ENCODE measurements at regions of chr19 and their contacts with region 1.

Region 1: GRCh38 chr19:3434712-3435553 is 45.4 kb downstream of the SMIM24 start:
- DNase-seq: peak; percentile 92 to 96 (median 95)
- H3K4me3 ChIP-seq: peak overlapping the region; percentile 38
- H3K27ac ChIP-seq: peak overlapping the region; percentile 69 to 81
- H3K4me1 ChIP-seq: peaks cover 10% of the 10 kb centered on the region
- H3K27me3 ChIP-seq: no peaks in the 10 kb centered on the region
- CTCF ChIP-seq: peak in 1 of 3 donors; percentile 11
- EP300 ChIP-seq: peak; percentile 10
- POLR2A ChIP-seq: no peak

Region 2: DNA sequence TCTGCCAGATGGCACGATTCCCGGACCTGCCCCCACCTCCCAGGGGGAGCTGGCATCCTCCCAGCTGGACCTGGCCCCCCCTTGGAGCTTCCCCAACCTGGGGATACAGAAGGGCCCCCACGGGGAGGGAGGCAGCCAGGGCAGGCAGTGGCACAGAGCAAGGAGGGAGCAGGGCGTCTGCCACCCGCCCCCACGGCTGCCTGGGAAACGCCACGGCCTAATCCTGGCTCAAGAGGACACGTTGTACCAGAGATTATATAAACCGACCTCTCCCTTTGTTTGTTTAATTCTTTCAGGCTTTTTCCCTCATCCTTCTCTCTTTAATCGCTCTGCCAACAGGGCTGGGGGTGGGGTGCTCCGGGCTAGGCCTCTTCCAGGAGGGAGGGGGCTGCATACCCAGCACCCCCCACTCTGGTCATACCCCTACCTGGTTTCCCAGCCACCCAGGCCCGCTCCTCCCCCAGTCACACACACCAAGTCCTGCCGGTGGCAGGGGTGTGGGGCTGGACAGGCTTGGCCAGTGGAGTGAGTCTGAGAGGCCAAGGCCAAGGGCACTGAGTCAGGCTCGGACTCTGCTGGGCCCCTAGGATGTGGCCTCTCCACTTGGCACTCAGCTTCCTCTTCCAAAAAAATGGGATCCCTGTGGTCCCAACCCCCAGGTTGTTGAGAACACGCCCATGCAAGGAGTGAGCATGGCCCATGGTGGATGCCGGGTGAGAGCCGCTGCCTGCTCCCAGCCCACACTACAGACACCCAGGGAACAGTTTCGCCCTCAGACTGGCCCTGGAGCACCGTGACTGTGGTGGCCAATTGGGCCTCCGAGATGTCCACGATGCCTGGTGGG is 98.0 kb before region 1 on chr19:
- intact Hi-C with region 1: loop called in 2 of 4 experiments (anchors 5 to 10 kb)
- DNase-seq: peak; percentile 93 to 97 (median 95)
- H3K4me3 ChIP-seq: no peak overlapping the region
- H3K27ac ChIP-seq: peak overlapping the region; percentile 18 to 90
- H3K4me1 ChIP-seq: peaks cover 18% of the 10 kb centered on the region
- H3K27me3 ChIP-seq: no peaks in the 10 kb centered on the region
- CTCF ChIP-seq: peak in 1 of 3 donors; percentile 32
- EP300 ChIP-seq: peak; percentile 76
- POLR2A ChIP-seq: peak; percentile 41

Region 3: GRCh38 chr19:3471954-3472655 is 37.2 kb after region 1 on chr19:
- intact Hi-C with region 1: loop called in 1 of 4 experiments (anchors 5 kb)
- DNase-seq: peak in 4 of 5 donors; percentile 62 to 76 (median 70)
- H3K4me3 ChIP-seq: no peak overlapping the region
- H3K27ac ChIP-seq: no peak overlapping the region
- H3K4me1 ChIP-seq: peaks cover 5% of the 10 kb centered on the region
- H3K27me3 ChIP-seq: no peaks in the 10 kb centered on the region
- CTCF ChIP-seq: peak; percentile 65 to 88 (median 81)
- EP300 ChIP-seq: no peak
- POLR2A ChIP-seq: no peak

Region 4: DNA sequence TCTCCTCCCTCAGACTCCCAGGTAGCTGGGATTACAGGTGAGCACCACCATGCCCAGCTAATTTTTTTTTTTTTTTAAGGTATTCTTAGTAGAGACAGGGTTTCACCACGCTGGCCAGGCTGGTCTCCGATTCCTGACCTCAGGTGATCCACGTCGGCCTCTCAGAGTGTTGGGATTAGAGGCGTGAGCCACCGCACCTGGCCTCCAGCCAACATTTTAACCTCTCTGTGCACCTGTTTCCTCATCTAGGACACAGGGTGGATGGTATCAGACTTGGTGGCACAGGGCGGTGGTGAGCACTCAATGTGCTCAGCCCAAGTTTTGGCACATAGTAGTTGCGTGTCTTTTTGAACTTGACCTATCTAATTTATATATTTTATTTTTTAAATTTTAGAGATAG is 314.0 kb after region 1 on chr19:
- intact Hi-C with region 1: no loop called
- DNase-seq: no peak
- H3K4me3 ChIP-seq: no peak overlapping the region
- H3K27ac ChIP-seq: no peak overlapping the region
- H3K4me1 ChIP-seq: no peaks in the 10 kb centered on the region
- H3K27me3 ChIP-seq: no peaks in the 10 kb centered on the region
- CTCF ChIP-seq: no peak
- EP300 ChIP-seq: no peak
- POLR2A ChIP-seq: no peak